GM10248 (cell line): ENCODE measurements at regions of chr7 and their contacts with region 1.

Region 1: GRCh38 chr7:20713792-20714191 is 72.9 kb downstream of the SP8 start:
- DNase-seq: no peak
- CTCF ChIP-seq: no peak

Region 2: GRCh38 chr7:20684581-20684980 is 29.2 kb before region 1 on chr7:
- CTCF ChIA-PET with region 1: no interaction called
- POLR2A ChIA-PET with region 1: interaction called, 14 read pairs
- DNase-seq: no peak
- CTCF ChIP-seq: no peak

Region 3: DNA sequence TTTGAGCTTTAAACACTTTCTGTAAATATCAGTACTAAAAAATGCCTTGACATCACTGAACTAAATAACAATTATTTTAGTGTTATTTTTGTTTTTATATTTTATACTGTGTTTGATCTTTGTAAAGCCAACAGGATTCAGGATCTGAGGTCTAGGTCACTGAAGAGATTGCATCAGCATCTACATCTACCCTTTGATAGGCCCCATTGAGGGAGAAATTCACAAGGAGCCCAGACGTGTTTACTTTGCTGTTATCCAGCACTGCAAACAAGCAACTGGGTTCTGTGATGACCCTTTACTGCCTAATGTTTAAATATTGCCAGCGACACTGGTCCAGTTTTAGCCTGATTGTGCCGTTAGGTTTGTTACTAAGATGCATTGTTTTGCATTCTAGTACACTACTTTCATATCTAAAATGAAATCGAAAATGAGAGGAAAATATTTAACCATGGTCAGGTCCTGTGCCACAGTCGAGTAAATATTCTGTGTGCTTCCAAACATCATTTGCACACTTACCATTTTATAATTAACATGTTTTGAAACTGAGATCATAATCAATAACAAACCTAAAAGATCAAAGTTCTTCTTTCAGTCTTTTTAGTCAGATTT is 24.2 kb after region 1 on chr7:
- CTCF ChIA-PET with region 1: no interaction called
- POLR2A ChIA-PET with region 1: no interaction called
- DNase-seq: no peak
- CTCF ChIP-seq: no peak

Region 4: DNA sequence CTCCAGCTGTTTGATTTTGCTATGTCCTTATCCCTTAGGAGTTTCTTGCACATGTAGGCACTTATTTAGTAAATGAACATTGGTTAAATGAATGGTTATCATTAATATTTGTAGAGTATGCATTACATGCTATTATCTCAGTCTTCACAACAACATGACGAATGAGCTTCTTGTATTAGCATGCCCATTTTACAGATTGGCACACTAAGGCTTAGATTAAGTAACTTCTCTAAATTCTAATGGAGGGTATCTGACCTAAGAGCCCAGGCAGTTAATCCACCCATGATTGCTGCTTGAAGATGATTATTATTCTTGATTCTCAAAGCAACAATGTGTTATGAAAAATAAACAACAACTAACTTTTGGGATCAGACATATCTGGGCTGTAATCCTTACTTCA is 40.2 kb after region 1 on chr7:
- CTCF ChIA-PET with region 1: no interaction called
- POLR2A ChIA-PET with region 1: no interaction called
- DNase-seq: no peak
- CTCF ChIP-seq: no peak

Region 5: GRCh38 chr7:21200503-21200902 is 486.7 kb after region 1 on chr7:
- CTCF ChIA-PET with region 1: no interaction called
- POLR2A ChIA-PET with region 1: no interaction called
- DNase-seq: no peak
- CTCF ChIP-seq: no peak